Activated CD8-positive, alpha-beta memory T cell treated with anti-CD3 and anti-CD28 coated beads, Interleukin-2, amount 10 ng/mL, durations not matched to agents 7 days and 5 days (primary cell): ENCODE measurements at regions of chr14 and their contacts with region 1.

Region 1: GRCh38 chr14:90697577-90698206 is 118.5 kb downstream of the TTC7B start:
- DNase-seq: peak; percentile 85
- ATAC-seq: peak; percentile 88
- H3K4me3 Mint-ChIP-seq: no peak overlapping the region
- H3K27ac Mint-ChIP-seq: no peak overlapping the region
- H3K4me1 Mint-ChIP-seq: peaks cover 21% of the 10 kb centered on the region
- H3K27me3 Mint-ChIP-seq: no peaks in the 10 kb centered on the region

Region 2: DNA sequence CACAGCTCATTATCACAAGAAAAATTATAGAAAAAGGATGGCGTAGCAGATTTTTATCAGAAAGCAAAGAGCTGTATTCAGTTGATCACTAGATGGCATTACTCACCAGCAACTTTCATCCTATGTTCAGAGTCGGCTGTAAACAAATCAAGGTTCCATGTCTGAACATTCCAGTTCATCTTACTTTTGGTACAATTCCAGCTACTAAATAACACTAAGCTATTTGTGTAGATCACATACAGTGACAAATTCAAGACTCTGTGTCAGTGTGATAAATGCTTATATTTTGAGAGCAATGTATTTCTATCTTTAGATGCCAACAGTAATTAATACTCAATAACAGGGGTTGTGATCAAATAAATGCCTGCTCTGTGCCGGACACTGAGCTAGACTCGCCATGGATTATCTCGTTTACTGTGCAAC is 396.0 kb before region 1 on chr14:
- CTCF ChIA-PET with region 1: interaction called, 11 read pairs
- DNase-seq: no peak
- ATAC-seq: peak; percentile 33
- H3K4me3 Mint-ChIP-seq: no peak overlapping the region
- H3K27ac Mint-ChIP-seq: no peak overlapping the region
- H3K4me1 Mint-ChIP-seq: peaks cover 14% of the 10 kb centered on the region
- H3K27me3 Mint-ChIP-seq: no peaks in the 10 kb centered on the region